CD4-positive, alpha-beta memory T cell (primary cell): ENCODE measurements at regions of chr13 and their contacts with region 1.

Region 1: GRCh38 chr13:104327211-104327610 is 1261.0 kb upstream of the SLC10A2 start:
- DNase-seq: no peak
- H3K4me3 ChIP-seq: no peak overlapping the region
- H3K4me3 Mint-ChIP-seq: no peak overlapping the region
- H3K27ac ChIP-seq: no peak overlapping the region
- H3K27ac Mint-ChIP-seq: no peak overlapping the region
- H3K4me1 ChIP-seq: no peaks in the 10 kb centered on the region
- H3K4me1 Mint-ChIP-seq: no peaks in the 10 kb centered on the region
- H3K27me3 ChIP-seq: no peaks in the 10 kb centered on the region
- H3K27me3 Mint-ChIP-seq: no peaks in the 10 kb centered on the region

Region 2: GRCh38 chr13:104310861-104311260 is 16.4 kb before region 1 on chr13:
- CTCF ChIA-PET with region 1: no interaction called
- POLR2A ChIA-PET with region 1: no interaction called
- intact Hi-C with region 1: loop called (anchors 2 kb)
- DNase-seq: no peak
- H3K4me3 ChIP-seq: no peak overlapping the region
- H3K4me3 Mint-ChIP-seq: no peak overlapping the region
- H3K27ac ChIP-seq: no peak overlapping the region
- H3K27ac Mint-ChIP-seq: no peak overlapping the region
- H3K4me1 ChIP-seq: no peaks in the 10 kb centered on the region
- H3K4me1 Mint-ChIP-seq: no peaks in the 10 kb centered on the region
- H3K27me3 ChIP-seq: no peaks in the 10 kb centered on the region
- H3K27me3 Mint-ChIP-seq: no peaks in the 10 kb centered on the region